Cardiac septum (tissue), 1 donor: ENCODE measurements at regions of chr1 and their contacts with region 1.

Region 1: DNA sequence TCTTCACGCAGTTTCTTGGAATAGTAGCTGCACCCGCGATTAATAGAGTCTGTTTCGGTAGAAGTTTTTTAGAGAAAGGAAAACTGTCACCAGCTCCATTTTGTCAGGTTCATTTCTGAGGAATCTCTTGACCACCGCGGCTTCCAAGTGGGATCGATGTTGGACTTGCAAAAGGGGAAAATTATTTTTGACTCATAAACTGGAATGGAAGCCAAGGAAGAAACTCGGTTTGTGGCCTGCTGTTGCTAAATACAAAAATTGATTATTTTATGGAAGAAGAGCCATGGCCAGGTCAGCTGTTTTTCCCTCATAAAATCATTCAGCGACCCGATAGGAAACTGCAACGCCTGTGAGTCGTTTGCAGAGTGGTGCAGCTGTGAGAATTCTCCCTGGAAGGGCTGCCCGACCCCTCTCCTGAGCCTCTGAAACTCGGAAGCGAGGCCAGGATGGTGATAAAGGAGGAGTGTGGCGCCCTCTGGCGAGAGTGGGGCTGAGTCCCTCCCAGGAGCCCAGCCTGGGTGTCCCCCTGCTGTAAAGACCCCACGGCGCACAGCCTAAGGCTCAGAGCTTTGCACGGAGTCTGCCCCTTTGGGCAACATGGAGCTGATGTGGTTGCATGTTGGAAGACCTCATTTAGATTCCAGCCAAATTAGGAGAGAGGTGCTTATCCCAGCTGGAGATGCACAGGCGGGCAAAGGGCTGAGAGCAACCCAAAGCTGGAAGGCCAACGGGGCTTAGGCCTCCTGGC is 83.6 kb upstream of the SLC25A33 start:
- DNase-seq: peak; percentile 80

Region 2: GRCh38 chr1:9110669-9111356 is 344.8 kb before region 1 on chr1:
- intact Hi-C with region 1: loop called (anchors 10 kb)
- DNase-seq: peak; percentile 93

Region 3: GRCh38 chr1:9269078-9269501 is 186.6 kb before region 1 on chr1:
- intact Hi-C with region 1: loop called (anchors 2 kb)
- DNase-seq: no peak

Region 4: DNA sequence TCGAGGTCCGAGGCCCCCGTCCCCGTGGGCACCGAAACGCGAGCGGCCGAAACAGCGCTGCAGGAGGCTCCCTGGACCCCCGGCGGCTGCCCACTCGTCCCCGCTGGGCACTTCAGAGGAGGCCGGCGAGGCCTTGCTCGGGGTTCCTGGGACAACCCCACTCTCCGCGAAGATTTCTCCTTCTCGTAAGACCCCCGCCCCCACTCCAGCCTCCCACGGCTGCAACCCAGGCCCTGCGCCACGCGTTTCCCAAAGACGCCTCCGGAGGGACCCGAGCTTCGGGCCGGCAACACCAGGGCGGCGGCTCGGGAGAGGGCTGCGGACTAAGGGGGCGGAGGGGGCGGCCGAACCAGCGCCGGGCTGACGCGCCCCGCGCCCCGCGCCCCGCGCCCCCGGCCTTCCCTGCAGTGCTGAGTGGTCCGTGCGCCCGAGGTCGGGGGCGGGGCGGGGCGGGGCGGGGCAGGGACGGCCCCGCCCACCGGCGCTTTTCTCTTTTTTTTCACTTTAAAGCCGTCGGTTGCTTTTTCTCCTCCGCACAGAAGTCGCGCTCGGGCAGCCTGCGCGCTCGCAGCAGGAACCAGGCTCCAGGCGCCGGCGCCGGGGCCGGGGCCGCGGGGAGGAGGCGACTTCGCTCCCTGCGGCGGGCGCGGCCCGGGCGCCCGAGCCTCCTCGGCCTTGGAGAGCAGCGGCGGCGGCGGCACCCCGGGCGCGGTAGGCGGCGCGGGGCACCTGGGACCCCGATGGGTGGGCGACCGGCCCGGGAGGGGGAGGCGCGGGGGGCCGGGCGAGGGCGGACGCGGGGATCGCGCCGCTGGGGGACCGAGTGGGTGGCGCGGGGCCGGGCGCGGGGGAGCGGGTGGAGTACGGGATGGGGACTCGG is 163.1 kb before region 1 on chr1 and contains the start of gene SPSB1:
- intact Hi-C with region 1: loop called (anchors 2 kb)
- DNase-seq: peak; percentile 88
- total RNA-seq, gene SPSB1: 12.9 TPM